Body of pancreas (tissue), 4 donors: ENCODE measurements at regions of chr9 and their contacts with region 1.

Region 1: GRCh38 chr9:72280913-72281500 is 84.0 kb downstream of the ZFAND5 start:
- DNase-seq: peak; percentile 77 to 82 (median 82)
- ATAC-seq: peak; percentile 91
- H3K4me3 ChIP-seq: no peak overlapping the region
- H3K27ac ChIP-seq: no peak overlapping the region
- H3K4me1 ChIP-seq: no peaks in the 10 kb centered on the region
- H3K27me3 ChIP-seq: no peaks in the 10 kb centered on the region
- CTCF ChIP-seq: peak; percentile 80 to 89 (median 86)
- POLR2A ChIP-seq: no peak

Region 2: GRCh38 chr9:72333709-72334108 is 52.7 kb after region 1 on chr9:
- intact Hi-C with region 1: no loop called
- DNase-seq: no peak
- ATAC-seq: no peak
- H3K4me3 ChIP-seq: no peak overlapping the region
- H3K27ac ChIP-seq: no peak overlapping the region
- H3K4me1 ChIP-seq: no peaks in the 10 kb centered on the region
- H3K27me3 ChIP-seq: no peaks in the 10 kb centered on the region
- CTCF ChIP-seq: peak in 2 of 7 experiments; percentile 7 to 16
- POLR2A ChIP-seq: no peak

Region 3: GRCh38 chr9:72592502-72593403 is 311.7 kb after region 1 on chr9:
- intact Hi-C with region 1: loop called (anchors 5 kb)
- DNase-seq: peak; percentile 26 to 65 (median 48)
- ATAC-seq: peak; percentile 92
- H3K4me3 ChIP-seq: no peak overlapping the region
- H3K27ac ChIP-seq: no peak overlapping the region
- H3K4me1 ChIP-seq: no peaks in the 10 kb centered on the region
- H3K27me3 ChIP-seq: no peaks in the 10 kb centered on the region
- CTCF ChIP-seq: peak; percentile 72 to 94 (median 91)
- POLR2A ChIP-seq: peak in 1 of 3 donors; percentile 8

Region 4: DNA sequence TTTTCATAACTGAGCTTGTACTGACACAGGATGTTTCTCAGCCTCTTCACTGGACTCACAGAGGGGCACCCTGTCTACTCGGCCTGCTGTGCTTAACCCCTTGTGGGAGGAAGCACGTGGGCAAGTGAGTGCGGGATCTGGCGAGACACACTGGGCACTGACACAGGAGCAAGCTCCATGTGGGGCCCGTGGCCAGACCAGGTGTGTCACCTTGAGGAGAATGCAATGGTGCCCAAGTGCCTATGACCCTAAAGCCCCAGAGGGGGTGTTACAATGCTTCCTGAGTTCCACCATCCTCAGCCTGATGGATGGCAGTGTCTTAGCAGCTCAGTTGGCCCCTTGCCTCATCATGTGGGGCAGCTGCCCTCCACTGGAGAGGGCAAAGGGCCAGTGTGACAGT is 543.0 kb after region 1 on chr9:
- intact Hi-C with region 1: loop called (anchors 5 kb)
- DNase-seq: no peak
- ATAC-seq: no peak
- H3K4me3 ChIP-seq: no peak overlapping the region
- H3K27ac ChIP-seq: no peak overlapping the region
- H3K4me1 ChIP-seq: peaks cover 25% of the 10 kb centered on the region
- H3K27me3 ChIP-seq: no peaks in the 10 kb centered on the region
- CTCF ChIP-seq: no peak
- POLR2A ChIP-seq: no peak